Ovary (tissue), 10 donors: ENCODE measurements at regions of chr21 and their contacts with region 1.

Region 1: GRCh38 chr21:15592271-15592860 is 137.4 kb upstream of the USP25 start:
- DNase-seq: no peak
- H3K4me3 ChIP-seq: no peak overlapping the region
- H3K27ac ChIP-seq: no peak overlapping the region
- H3K4me1 ChIP-seq: no peaks in the 10 kb centered on the region
- H3K27me3 ChIP-seq: no peaks in the 10 kb centered on the region
- CTCF ChIP-seq: peak in 2 of 3 donors; percentile 26 to 29
- EP300 ChIP-seq: no peak
- POLR2A ChIP-seq: no peak

Region 2: DNA sequence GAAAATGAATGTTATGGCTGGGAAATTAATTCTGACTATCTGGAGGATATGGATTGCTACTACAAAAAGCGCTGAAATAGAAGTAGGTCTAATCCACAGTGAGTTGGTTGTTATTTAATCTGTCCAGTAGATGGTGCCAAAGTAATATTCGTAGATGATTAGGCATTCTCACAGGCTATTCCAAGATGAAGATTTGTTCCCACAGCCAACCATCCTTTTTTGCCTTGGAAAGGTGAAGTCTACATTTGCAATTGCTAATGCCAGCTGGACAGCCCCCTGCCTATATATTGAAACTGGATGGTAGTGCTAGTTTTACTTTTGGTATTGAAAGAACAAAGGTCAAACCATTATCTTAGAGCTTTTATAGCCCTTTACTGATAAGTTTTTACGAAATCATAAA is 1332.6 kb before region 1 on chr21:
- intact Hi-C with region 1: loop called in 1 of 4 experiments (anchors 10 kb)
- DNase-seq: no peak
- H3K4me3 ChIP-seq: no peak overlapping the region
- H3K27ac ChIP-seq: no peak overlapping the region
- H3K4me1 ChIP-seq: no peaks in the 10 kb centered on the region
- H3K27me3 ChIP-seq: no peaks in the 10 kb centered on the region
- CTCF ChIP-seq: peak in 2 of 3 donors; percentile 22 to 32
- EP300 ChIP-seq: no peak
- POLR2A ChIP-seq: no peak

Region 3: GRCh38 chr21:15534450-15534886 is 57.9 kb before region 1 on chr21:
- intact Hi-C with region 1: no loop called
- DNase-seq: no peak
- H3K4me3 ChIP-seq: no peak overlapping the region
- H3K27ac ChIP-seq: no peak overlapping the region
- H3K4me1 ChIP-seq: no peaks in the 10 kb centered on the region
- H3K27me3 ChIP-seq: no peaks in the 10 kb centered on the region
- CTCF ChIP-seq: no peak
- EP300 ChIP-seq: no peak
- POLR2A ChIP-seq: no peak

Region 4: GRCh38 chr21:16102113-16102512 is 509.7 kb after region 1 on chr21:
- intact Hi-C with region 1: no loop called
- DNase-seq: no peak
- H3K4me3 ChIP-seq: no peak overlapping the region
- H3K27ac ChIP-seq: no peak overlapping the region
- H3K4me1 ChIP-seq: no peaks in the 10 kb centered on the region
- H3K27me3 ChIP-seq: no peaks in the 10 kb centered on the region
- CTCF ChIP-seq: no peak
- EP300 ChIP-seq: no peak
- POLR2A ChIP-seq: no peak